GM12878 (cell line): ENCODE measurements at regions of chr5 and their contacts with region 1.

Region 1: GRCh38 chr5:28473531-28474107 is 1435.2 kb upstream of the CDH9 start:
- DNase-seq: no peak
- ATAC-seq: peak; percentile 64
- H3K4me3 ChIP-seq: no peak overlapping the region
- H3K27ac ChIP-seq: no peak overlapping the region
- H3K4me1 ChIP-seq: no peaks in the 10 kb centered on the region
- H3K27me3 ChIP-seq: no peaks in the 10 kb centered on the region
- CTCF ChIP-seq: peak in 1 of 3 experiments; percentile 19; a peak in 2 of 6 replicates
- EP300 ChIP-seq: no peak
- POLR2A ChIP-seq: no peak
- RAD21 ChIP-seq: no peak

Region 2: GRCh38 chr5:28451483-28451882 is 22.1 kb before region 1 on chr5:
- CTCF ChIA-PET with region 1: interaction called, 10 read pairs
- POLR2A ChIA-PET with region 1: no interaction called
- RAD21 ChIA-PET with region 1: no interaction called
- SMC1A ChIA-PET with region 1: interaction called, 3 read pairs
- in situ Hi-C with region 1: no loop called
- intact Hi-C with region 1: no loop called
- DNase-seq: no peak
- ATAC-seq: no peak
- H3K4me3 ChIP-seq: no peak overlapping the region
- H3K27ac ChIP-seq: no peak overlapping the region
- H3K4me1 ChIP-seq: no peaks in the 10 kb centered on the region
- H3K27me3 ChIP-seq: no peaks in the 10 kb centered on the region
- CTCF ChIP-seq: no peak
- EP300 ChIP-seq: no peak
- POLR2A ChIP-seq: no peak
- RAD21 ChIP-seq: no peak

Region 3: DNA sequence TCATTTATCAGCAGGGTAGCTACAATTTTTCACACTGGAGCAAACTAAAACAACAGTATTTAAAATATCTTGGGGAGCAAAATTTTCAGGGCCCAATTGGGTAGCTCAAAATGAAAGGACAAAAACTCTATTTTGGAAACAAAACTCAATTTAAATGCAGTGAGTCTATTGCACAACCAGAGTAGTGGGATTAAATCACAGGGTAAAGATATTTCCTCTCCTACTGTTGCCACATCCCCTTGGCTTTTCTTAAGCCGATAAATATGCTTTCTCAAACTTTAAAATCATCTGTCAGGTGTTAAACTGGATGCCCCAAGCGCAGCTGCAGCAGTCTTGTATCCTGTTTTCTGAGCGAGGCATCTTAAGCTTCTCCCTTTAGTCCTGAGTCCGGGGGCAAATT is 39.0 kb after region 1 on chr5:
- CTCF ChIA-PET with region 1: interaction called, 11 read pairs
- POLR2A ChIA-PET with region 1: no interaction called
- RAD21 ChIA-PET with region 1: interaction called, 4 read pairs
- SMC1A ChIA-PET with region 1: interaction called, 17 read pairs
- in situ Hi-C with region 1: no loop called
- intact Hi-C with region 1: no loop called
- DNase-seq: no peak
- ATAC-seq: no peak
- H3K4me3 ChIP-seq: no peak overlapping the region
- H3K27ac ChIP-seq: no peak overlapping the region
- H3K4me1 ChIP-seq: no peaks in the 10 kb centered on the region
- H3K27me3 ChIP-seq: no peaks in the 10 kb centered on the region
- CTCF ChIP-seq: no peak
- EP300 ChIP-seq: no peak
- POLR2A ChIP-seq: no peak
- RAD21 ChIP-seq: no peak

Region 4: GRCh38 chr5:28548856-28549255 is 75.2 kb after region 1 on chr5:
- CTCF ChIA-PET with region 1: interaction called, 20 read pairs
- POLR2A ChIA-PET with region 1: no interaction called
- RAD21 ChIA-PET with region 1: interaction called, 10 read pairs
- SMC1A ChIA-PET with region 1: interaction called, 13 read pairs
- in situ Hi-C with region 1: no loop called
- intact Hi-C with region 1: no loop called
- DNase-seq: no peak
- ATAC-seq: no peak
- H3K4me3 ChIP-seq: no peak overlapping the region
- H3K27ac ChIP-seq: no peak overlapping the region
- H3K4me1 ChIP-seq: no peaks in the 10 kb centered on the region
- H3K27me3 ChIP-seq: no peaks in the 10 kb centered on the region
- CTCF ChIP-seq: no peak
- EP300 ChIP-seq: no peak
- POLR2A ChIP-seq: no peak
- RAD21 ChIP-seq: no peak

Region 5: DNA sequence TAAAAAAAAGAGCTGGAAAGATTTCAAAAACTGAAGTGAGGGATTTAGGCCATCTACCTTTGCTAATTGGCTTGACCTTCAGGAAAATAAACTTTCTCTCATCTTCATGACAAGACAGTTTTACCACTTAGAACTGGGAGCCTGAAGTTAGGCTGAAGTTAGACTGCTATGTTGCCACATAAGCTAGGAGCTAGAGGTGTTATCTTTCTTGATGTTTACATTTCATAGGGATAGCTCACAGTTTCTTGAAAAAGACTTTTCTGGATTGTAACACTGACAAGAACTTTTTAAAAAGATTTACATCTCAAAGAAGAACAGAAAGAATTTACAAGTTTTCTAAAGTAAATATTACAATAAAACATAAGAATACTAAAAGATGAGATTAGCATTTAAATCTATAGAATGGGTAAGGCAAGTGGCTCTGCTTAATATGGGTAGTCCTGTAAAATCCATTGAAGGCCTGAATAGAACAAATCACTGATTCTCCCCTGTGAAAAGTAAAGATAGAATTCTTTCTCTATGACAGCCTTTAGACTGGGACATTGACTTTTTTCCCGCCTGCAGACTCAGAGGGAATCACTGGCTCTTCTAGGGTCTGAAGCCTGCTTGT is 230.1 kb after region 1 on chr5:
- CTCF ChIA-PET with region 1: no interaction called
- POLR2A ChIA-PET with region 1: no interaction called
- RAD21 ChIA-PET with region 1: interaction called, 4 read pairs
- SMC1A ChIA-PET with region 1: interaction called, 11 read pairs
- in situ Hi-C with region 1: no loop called
- intact Hi-C with region 1: no loop called
- DNase-seq: no peak
- ATAC-seq: no peak
- H3K4me3 ChIP-seq: no peak overlapping the region
- H3K27ac ChIP-seq: no peak overlapping the region
- H3K4me1 ChIP-seq: no peaks in the 10 kb centered on the region
- H3K27me3 ChIP-seq: no peaks in the 10 kb centered on the region
- CTCF ChIP-seq: no peak
- EP300 ChIP-seq: no peak
- POLR2A ChIP-seq: no peak
- RAD21 ChIP-seq: no peak

Region 6: DNA sequence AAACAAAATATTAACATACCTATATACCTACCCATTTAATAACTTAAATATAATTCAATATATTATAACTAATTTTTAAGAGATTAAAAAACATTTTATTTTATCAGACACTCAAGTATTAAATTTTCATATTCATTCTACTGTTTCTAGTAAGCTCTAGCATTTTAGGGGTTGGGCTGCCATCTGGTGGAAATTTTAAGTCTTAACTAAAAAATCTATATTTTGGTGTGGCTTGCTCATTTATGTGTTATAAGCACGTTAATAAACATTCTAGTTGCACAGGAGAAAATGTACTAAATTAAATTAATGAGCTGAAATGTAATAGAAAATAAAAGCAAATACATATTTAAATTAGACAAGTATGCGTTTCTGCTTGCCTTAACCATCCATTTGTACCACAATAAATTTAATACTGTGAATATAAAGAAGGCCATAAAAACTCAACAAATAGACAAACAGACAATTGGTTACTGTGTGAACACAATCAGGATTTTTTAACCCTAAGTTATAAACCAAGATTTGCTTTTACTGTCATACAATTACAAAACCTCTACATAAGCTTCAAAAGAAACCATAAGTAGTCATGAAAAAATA is 293.0 kb after region 1 on chr5:
- CTCF ChIA-PET with region 1: interaction called, 94 read pairs
- POLR2A ChIA-PET with region 1: no interaction called
- RAD21 ChIA-PET with region 1: interaction called, 91 read pairs
- SMC1A ChIA-PET with region 1: interaction called, 102 read pairs
- in situ Hi-C with region 1: no loop called
- intact Hi-C with region 1: loop called (anchors 1 kb)
- DNase-seq: no peak
- ATAC-seq: no peak
- H3K4me3 ChIP-seq: no peak overlapping the region
- H3K27ac ChIP-seq: no peak overlapping the region
- H3K4me1 ChIP-seq: no peaks in the 10 kb centered on the region
- H3K27me3 ChIP-seq: no peaks in the 10 kb centered on the region
- CTCF ChIP-seq: peak in 1 of 3 experiments; percentile 42; a peak in 1 of 6 replicates
- EP300 ChIP-seq: no peak
- POLR2A ChIP-seq: no peak
- RAD21 ChIP-seq: peak; percentile 55